ENCODE measurements at regions of chr7 and their contacts with region 1.

Region 1: GRCh38 chr7:26853788-26854393 is 10.5 kb downstream of the SKAP2 start:
- DNase-seq: peak in 1 of 2 experiments; percentile 45
- H3K4me3 ChIP-seq: no peak overlapping the region
- H3K4me3 Mint-ChIP-seq: no peak overlapping the region
- H3K27ac Mint-ChIP-seq: no peak overlapping the region
- H3K4me1 ChIP-seq: no peaks in the 10 kb centered on the region
- H3K4me1 Mint-ChIP-seq: no peaks in the 10 kb centered on the region
- H3K27me3 ChIP-seq: no peaks in the 10 kb centered on the region
- H3K27me3 Mint-ChIP-seq: no peaks in the 10 kb centered on the region
- CTCF ChIP-seq: peak; percentile 47 to 64

Region 2: GRCh38 chr7:27160546-27161213 is 306.8 kb after region 1 on chr7:
- CTCF ChIA-PET with region 1: interaction called, 17 read pairs
- POLR2A ChIA-PET with region 1: no interaction called
- intact Hi-C with region 1: no loop called
- DNase-seq: peak; percentile 84 to 93
- H3K4me3 ChIP-seq: peak overlapping the region; percentile 73
- H3K4me3 Mint-ChIP-seq: peak overlapping the region; percentile 77
- H3K27ac Mint-ChIP-seq: no peak overlapping the region
- H3K4me1 ChIP-seq: peaks cover 7% of the 10 kb centered on the region
- H3K4me1 Mint-ChIP-seq: peaks cover 14% of the 10 kb centered on the region
- H3K27me3 ChIP-seq: no peaks in the 10 kb centered on the region
- H3K27me3 Mint-ChIP-seq: no peaks in the 10 kb centered on the region
- CTCF ChIP-seq: peak; percentile 94 to 98

Region 3: DNA sequence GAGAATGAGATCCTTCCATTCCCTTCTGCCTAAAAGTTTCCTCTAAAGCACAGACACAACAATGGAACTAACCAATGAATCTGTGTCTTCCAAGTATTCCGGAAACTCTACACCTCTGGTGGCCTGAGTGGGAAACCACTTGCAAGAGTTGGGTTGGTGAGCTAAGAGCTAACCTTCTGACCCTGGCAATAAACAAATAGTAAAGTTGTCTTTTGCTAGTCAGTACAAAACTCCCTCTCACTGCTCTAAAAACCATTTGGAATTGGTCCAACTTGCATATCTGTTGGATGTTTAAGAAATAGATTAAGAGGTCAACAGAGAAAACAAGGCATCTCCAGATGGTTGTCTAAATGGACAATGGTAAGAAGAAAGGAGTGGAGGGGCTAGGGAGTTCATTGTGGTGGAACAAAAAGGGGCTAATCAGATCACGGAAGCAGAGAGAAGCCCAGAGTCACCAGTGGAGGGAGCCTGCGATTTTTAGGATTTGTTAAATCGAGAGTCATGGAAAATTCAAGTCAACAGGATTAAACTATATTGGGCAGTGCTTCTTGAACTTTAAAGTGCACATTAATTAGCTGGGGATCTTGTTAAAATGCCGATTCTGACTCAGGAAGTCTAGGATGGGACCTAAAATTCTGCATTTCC is 581.0 kb after region 1 on chr7:
- CTCF ChIA-PET with region 1: no interaction called
- POLR2A ChIA-PET with region 1: no interaction called
- intact Hi-C with region 1: no loop called
- DNase-seq: no peak
- H3K4me3 ChIP-seq: no peak overlapping the region
- H3K4me3 Mint-ChIP-seq: no peak overlapping the region
- H3K27ac Mint-ChIP-seq: no peak overlapping the region
- H3K4me1 ChIP-seq: no peaks in the 10 kb centered on the region
- H3K4me1 Mint-ChIP-seq: no peaks in the 10 kb centered on the region
- H3K27me3 ChIP-seq: no peaks in the 10 kb centered on the region
- H3K27me3 Mint-ChIP-seq: no peaks in the 10 kb centered on the region
- CTCF ChIP-seq: peak in 1 of 2 experiments; percentile 11

Region 4: DNA sequence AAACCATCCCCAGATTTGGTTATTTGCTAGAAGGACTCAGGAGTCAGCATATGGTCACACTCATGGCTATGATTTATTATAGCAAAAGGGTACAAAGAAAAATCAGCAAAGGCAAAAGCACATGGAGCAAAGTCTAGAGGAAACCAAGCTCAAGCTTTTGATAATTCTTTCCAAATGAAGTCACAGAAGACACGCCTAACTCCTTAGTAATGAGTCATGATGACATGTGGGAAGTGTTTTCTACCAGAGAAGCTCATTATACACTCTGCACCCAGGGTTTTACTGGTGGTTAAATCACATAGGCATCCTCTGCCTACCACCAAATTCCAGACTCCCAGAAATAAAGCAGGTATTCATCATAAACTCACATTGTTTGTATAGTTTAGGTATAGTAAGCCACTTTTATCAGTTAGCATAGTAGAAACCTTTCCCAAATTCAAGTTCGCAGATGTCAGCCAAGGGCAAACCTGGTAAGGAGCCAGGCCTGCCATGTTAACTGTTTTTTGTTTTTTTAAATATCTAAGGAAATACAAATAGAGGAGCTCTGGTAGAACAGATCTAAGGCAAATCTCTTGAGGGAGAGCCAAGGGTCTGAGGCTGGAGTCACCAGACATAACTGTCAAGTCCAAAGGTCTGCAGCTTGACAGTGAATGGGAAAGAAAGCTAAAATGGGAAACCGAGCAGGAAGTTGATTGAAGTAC is 824.2 kb after region 1 on chr7:
- CTCF ChIA-PET with region 1: no interaction called
- POLR2A ChIA-PET with region 1: no interaction called
- intact Hi-C with region 1: no loop called
- DNase-seq: peak in 1 of 2 experiments; percentile 43
- H3K4me3 ChIP-seq: no peak overlapping the region
- H3K4me3 Mint-ChIP-seq: no peak overlapping the region
- H3K27ac Mint-ChIP-seq: peak overlapping the region; percentile 73
- H3K4me1 ChIP-seq: peaks cover 23% of the 10 kb centered on the region
- H3K4me1 Mint-ChIP-seq: peaks cover 12% of the 10 kb centered on the region
- H3K27me3 ChIP-seq: no peaks in the 10 kb centered on the region
- H3K27me3 Mint-ChIP-seq: no peaks in the 10 kb centered on the region
- CTCF ChIP-seq: no peak